K562 (cell line): ENCODE measurements at regions of chr1 and their contacts with region 1.

Region 1: DNA sequence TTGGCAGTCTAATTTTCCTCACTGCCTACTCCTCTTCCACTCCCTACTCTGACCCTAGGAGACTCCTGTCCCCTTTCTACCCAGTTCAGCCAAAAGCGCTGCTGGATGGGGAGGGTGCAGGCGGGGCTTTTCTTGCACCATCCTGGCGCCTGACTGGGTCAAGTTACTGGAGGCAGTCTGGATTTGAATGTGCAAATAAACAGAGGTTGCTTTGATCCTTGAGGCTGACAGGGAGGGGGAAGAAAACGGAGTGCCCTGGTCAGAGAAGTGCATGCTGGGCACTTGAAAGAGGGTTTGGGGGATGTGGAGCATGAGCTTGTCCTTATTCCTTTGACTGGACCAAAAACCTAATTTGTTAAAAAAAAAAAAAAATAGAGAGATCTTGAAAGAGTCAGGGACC is 76.8 kb upstream of the SOX13 start:
- DNase-seq: no peak
- ATAC-seq: no peak
- H3K4me3 ChIP-seq: no peak overlapping the region
- H3K27ac ChIP-seq: no peak overlapping the region
- H3K4me1 ChIP-seq: no peaks in the 10 kb centered on the region
- H3K27me3 ChIP-seq: peaks cover 10 to 21% of the 10 kb centered on the region in 2 experiments; a peak in 4 of 5 replicates
- CTCF ChIP-seq: no peak
- EP300 ChIP-seq: no peak
- POLR2A ChIP-seq: no peak
- RAD21 ChIP-seq: no peak

Region 2: DNA sequence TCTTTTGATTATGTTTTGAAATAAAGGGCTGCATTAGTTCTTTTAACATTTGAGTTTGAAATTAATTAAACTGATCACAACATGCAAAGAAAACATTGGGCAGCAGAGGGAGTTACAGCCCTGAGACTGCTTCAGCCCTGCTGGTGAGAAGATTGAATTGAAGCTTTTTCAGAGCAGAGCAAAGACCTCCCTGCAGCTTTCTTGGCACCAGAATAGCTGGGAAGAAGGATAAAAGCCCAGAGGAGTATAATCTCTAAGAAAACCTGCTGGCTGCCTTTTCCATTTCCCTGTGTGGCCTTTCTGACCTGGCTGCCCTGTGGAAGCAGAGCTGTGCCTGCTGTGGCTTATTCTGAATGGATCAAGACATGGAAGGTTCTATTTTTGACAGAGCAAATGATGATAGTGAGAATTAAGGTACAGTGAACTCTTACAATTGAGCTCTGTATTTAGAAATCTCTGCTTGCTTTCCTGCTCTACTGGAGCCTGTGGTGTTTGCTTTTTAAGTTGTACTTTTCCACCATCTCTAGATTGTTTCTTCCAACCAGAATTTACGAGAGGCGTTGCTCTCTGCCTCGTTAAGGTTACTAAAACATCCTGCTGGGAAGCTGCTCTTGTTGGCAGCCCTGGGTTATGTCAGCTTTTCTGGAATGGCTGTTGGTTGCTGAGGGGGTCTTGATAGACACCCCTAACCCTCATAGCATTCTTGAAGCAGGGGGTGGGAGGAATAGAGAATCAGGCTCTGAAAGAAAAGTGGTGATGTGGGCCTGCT is 124.8 kb before region 1 on chr1:
- CTCF ChIA-PET with region 1: no interaction called
- POLR2A ChIA-PET with region 1: no interaction called
- in situ Hi-C with region 1: no loop called
- intact Hi-C with region 1: loop called (anchors 10 kb)
- DNase-seq: peak; percentile 56 to 71 (median 68)
- ATAC-seq: peak; percentile 91
- H3K4me3 ChIP-seq: no peak overlapping the region
- H3K27ac ChIP-seq: no peak overlapping the region
- H3K4me1 ChIP-seq: no peaks in the 10 kb centered on the region
- H3K27me3 ChIP-seq: no peaks in the 10 kb centered on the region
- CTCF ChIP-seq: peak; percentile 88 to 99 (median 99)
- EP300 ChIP-seq: no peak
- POLR2A ChIP-seq: 0 out of 2 replicates have a peak, but pooled peaks have one; percentile 37
- RAD21 ChIP-seq: peak; percentile 95 to 97